Heart left ventricle (tissue), 16 donors: ENCODE measurements at regions of chr4 and their contacts with region 1.

Region 1: GRCh38 chr4:12633053-12633651 is 851.0 kb downstream of the RAB28 start:
- DNase-seq: peak; percentile 62 to 75 (median 69)
- ATAC-seq: peak; percentile 79 to 91 (median 89)
- H3K4me3 ChIP-seq: no peak overlapping the region
- H3K27ac ChIP-seq: no peak overlapping the region
- H3K4me1 ChIP-seq: no peaks in the 10 kb centered on the region
- H3K27me3 ChIP-seq: no peaks in the 10 kb centered on the region
- CTCF ChIP-seq: peak; percentile 76 to 93 (median 85)
- POLR2A ChIP-seq: no peak

Region 2: GRCh38 chr4:11765849-11766453 is 867.2 kb before region 1 on chr4:
- intact Hi-C with region 1: loop called in 6 of 10 experiments (anchors 5 to 10 kb)
- DNase-seq: no peak
- ATAC-seq: no peak
- H3K4me3 ChIP-seq: no peak overlapping the region
- H3K27ac ChIP-seq: no peak overlapping the region
- H3K4me1 ChIP-seq: no peaks in the 10 kb centered on the region
- H3K27me3 ChIP-seq: no peaks in the 10 kb centered on the region
- CTCF ChIP-seq: peak; percentile 58 to 85 (median 71)
- POLR2A ChIP-seq: no peak

Region 3: GRCh38 chr4:11805842-11806241 is 827.3 kb before region 1 on chr4:
- intact Hi-C with region 1: loop called in 7 of 10 experiments (anchors 5 to 10 kb)
- DNase-seq: no peak
- ATAC-seq: peak; percentile 55 to 83 (median 80)
- H3K4me3 ChIP-seq: no peak overlapping the region
- H3K27ac ChIP-seq: no peak overlapping the region
- H3K4me1 ChIP-seq: no peaks in the 10 kb centered on the region
- H3K27me3 ChIP-seq: no peaks in the 10 kb centered on the region
- CTCF ChIP-seq: peak; percentile 38 to 64 (median 56)
- POLR2A ChIP-seq: no peak

Region 4: GRCh38 chr4:12041828-12042227 is 591.3 kb before region 1 on chr4:
- intact Hi-C with region 1: loop called in 9 of 10 experiments (anchors 2 to 10 kb)
- DNase-seq: peak in 1 of 5 donors; percentile 17
- ATAC-seq: peak in 3 of 4 donors; percentile 55 to 69 (median 62)
- H3K4me3 ChIP-seq: no peak overlapping the region
- H3K27ac ChIP-seq: no peak overlapping the region
- H3K4me1 ChIP-seq: no peaks in the 10 kb centered on the region
- H3K27me3 ChIP-seq: no peaks in the 10 kb centered on the region
- CTCF ChIP-seq: peak; percentile 21 to 55 (median 42)
- POLR2A ChIP-seq: no peak

Region 5: GRCh38 chr4:12488672-12489071 is 144.5 kb before region 1 on chr4:
- intact Hi-C with region 1: loop called in 2 of 10 experiments (anchors 10 kb)
- DNase-seq: peak; percentile 64 to 89 (median 78)
- ATAC-seq: peak; percentile 97 to 99 (median 98)
- H3K4me3 ChIP-seq: no peak overlapping the region
- H3K27ac ChIP-seq: peak overlapping the region in 11 of 12 donors; percentile 30 to 86 (median 63)
- H3K4me1 ChIP-seq: peaks cover 0 to 8% (median 0%) of the 10 kb centered on the region in 12 donors
- H3K27me3 ChIP-seq: no peaks in the 10 kb centered on the region
- CTCF ChIP-seq: no peak
- POLR2A ChIP-seq: no peak